ENCODE measurements at regions of chr2 and their contacts with region 1.

Region 1: GRCh38 chr2:209600361-209601171 is 171.1 kb upstream of the UNC80 start:
- DNase-seq: no peak
- H3K4me3 ChIP-seq: no peak overlapping the region
- H3K27ac ChIP-seq: no peak overlapping the region
- H3K4me1 ChIP-seq: no peaks in the 10 kb centered on the region
- H3K27me3 ChIP-seq: no peaks in the 10 kb centered on the region
- CTCF ChIP-seq: no peak
- EP300 ChIP-seq: no peak
- POLR2A ChIP-seq: no peak

Region 2: GRCh38 chr2:208722731-208723130 is 877.8 kb before region 1 on chr2:
- in situ Hi-C with region 1: no loop called
- intact Hi-C with region 1: loop called (anchors 5 kb)
- DNase-seq: no peak
- H3K4me3 ChIP-seq: no peak overlapping the region
- H3K27ac ChIP-seq: no peak overlapping the region
- H3K4me1 ChIP-seq: peaks cover 2 to 30% (median 12%) of the 10 kb centered on the region in 4 donors
- H3K27me3 ChIP-seq: no peaks in the 10 kb centered on the region
- CTCF ChIP-seq: no peak
- EP300 ChIP-seq: no peak
- POLR2A ChIP-seq: no peak

Region 3: GRCh38 chr2:209549589-209549988 is 51.0 kb before region 1 on chr2:
- in situ Hi-C with region 1: no loop called
- intact Hi-C with region 1: no loop called
- DNase-seq: no peak
- H3K4me3 ChIP-seq: no peak overlapping the region
- H3K27ac ChIP-seq: no peak overlapping the region
- H3K4me1 ChIP-seq: no peaks in the 10 kb centered on the region
- H3K27me3 ChIP-seq: no peaks in the 10 kb centered on the region
- CTCF ChIP-seq: no peak
- EP300 ChIP-seq: no peak
- POLR2A ChIP-seq: no peak

Region 4: DNA sequence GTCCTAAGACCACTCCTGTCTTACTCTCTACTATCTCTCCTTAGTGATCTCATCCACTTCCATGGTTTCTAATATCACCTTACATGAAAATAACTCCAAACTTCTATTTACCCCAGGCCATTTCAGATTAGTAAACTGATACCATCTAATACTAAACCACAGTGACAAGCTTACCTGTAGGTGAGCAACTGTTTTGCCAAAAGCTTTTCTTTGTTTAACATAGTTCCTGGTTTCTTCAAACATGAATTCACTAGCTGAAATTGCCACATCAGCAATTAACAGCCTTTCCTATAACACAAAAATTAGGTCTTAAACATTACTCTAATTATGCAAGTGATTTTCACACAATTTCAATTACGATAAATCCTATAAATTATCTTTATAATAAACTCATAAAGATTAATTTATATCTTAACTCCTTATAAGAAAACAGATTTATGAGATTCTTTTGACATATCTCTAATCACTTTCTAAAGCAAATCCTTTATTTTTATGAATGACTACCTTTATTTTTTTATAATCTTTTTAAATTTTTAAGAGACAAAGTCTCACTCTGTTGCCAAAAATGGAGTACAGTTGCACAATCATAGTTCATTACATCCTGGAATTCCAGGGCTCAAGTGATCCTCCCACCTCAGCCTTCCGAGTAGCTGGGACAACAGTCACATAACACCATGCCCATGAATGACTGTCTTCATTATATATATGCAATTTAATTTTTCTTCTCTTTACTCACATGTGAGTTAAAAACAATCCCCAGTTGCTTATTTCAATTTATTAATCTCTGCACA is 602.8 kb after region 1 on chr2:
- in situ Hi-C with region 1: no loop called
- intact Hi-C with region 1: no loop called
- DNase-seq: no peak
- H3K4me3 ChIP-seq: no peak overlapping the region
- H3K27ac ChIP-seq: no peak overlapping the region
- H3K4me1 ChIP-seq: no peaks in the 10 kb centered on the region
- H3K27me3 ChIP-seq: peaks cover 27% of the 10 kb centered on the region
- CTCF ChIP-seq: no peak
- EP300 ChIP-seq: no peak
- POLR2A ChIP-seq: no peak

Measured in transverse colon (tissue), 4 donors.